Endothelial cell of umbilical vein (primary cell): ENCODE measurements at regions of chr1 and their contacts with region 1.

Region 1: GRCh38 chr1:225977937-225978748 is 21.0 kb downstream of the SDE2 start:
- DNase-seq: no peak
- H3K4me3 ChIP-seq: no peak overlapping the region
- H3K27ac ChIP-seq: no peak overlapping the region
- H3K4me1 ChIP-seq: no peaks in the 10 kb centered on the region
- H3K27me3 ChIP-seq: no peaks in the 10 kb centered on the region
- CTCF ChIP-seq: no peak
- POLR2A ChIP-seq: no peak

Region 2: GRCh38 chr1:224503161-224504118 is 1474.7 kb before region 1 on chr1:
- CTCF ChIA-PET with region 1: no interaction called
- POLR2A ChIA-PET with region 1: no interaction called
- dilution Hi-C with region 1: no loop called
- intact Hi-C with region 1: no loop called
- DNase-seq: peak; percentile 93
- H3K4me3 ChIP-seq: no peak overlapping the region
- H3K27ac ChIP-seq: peak overlapping the region; percentile 23
- H3K4me1 ChIP-seq: peaks cover 28% of the 10 kb centered on the region
- H3K27me3 ChIP-seq: no peaks in the 10 kb centered on the region
- CTCF ChIP-seq: peak in 1 of 2 donors; percentile 27
- POLR2A ChIP-seq: no peak

Region 3: DNA sequence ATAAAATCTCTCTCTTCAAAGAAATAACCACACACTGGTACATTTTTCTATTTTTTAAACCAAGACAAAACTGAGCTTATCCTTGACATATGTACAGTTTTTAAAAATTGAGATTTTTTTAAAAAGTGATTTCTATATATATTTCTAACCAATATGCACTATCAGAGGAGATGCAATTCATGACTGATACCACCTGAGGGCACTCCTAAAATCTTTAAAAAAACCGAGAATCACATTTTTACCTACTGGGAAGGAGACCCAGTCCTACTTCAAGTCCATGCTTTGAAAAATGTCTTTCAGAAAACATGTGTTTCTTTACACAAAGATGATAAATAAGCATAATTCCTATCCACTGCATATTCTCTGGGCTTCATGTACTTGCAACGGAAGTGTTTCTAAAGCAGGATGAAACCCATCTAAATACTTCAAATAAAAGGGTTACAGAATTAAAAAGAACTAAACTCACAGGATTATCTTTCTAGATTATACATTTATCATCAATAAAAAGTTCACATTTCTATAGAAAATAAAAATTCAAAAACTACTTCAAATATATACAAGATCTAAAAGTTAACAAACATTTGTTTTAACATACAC is 423.8 kb before region 1 on chr1:
- CTCF ChIA-PET with region 1: no interaction called
- POLR2A ChIA-PET with region 1: no interaction called
- dilution Hi-C with region 1: no loop called
- intact Hi-C with region 1: loop called (anchors 10 kb)
- DNase-seq: peak; percentile 57
- H3K4me3 ChIP-seq: no peak overlapping the region
- H3K27ac ChIP-seq: no peak overlapping the region
- H3K4me1 ChIP-seq: no peaks in the 10 kb centered on the region
- H3K27me3 ChIP-seq: no peaks in the 10 kb centered on the region
- CTCF ChIP-seq: peak; percentile 30 to 32
- POLR2A ChIP-seq: no peak

Region 4: DNA sequence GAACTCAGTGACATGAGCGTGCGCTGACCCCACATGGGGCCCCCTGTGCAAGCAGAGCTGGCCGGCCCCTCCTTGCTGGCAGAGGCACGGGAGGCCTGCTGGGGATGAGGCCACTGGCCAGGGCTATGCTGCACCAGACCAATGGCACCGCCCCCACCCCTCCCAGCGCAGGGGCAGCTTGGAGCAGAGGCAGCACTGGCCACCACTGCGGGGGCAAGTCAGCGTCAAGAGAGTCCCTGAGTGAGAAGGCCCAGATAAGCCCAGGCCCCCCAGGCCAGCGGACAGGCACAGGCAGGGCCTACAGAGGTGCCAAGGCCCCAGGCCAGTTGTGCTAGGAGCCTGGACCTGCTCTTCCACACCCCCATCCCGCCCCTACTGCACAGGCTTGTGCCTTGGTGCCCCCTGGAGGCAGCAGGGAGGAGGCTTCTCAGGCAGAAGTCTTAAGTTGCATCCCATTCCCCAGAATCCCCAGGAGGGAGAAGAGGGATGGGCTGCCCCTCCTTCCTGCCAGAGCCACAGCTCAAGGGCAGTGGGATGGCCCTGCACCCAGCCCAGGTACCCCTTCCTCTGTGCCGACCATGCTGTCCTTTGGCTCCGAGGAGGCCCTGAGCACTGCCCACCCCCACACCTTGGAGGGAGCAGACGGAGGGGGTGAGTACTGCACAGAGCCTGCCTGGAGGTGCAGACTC is 132.4 kb before region 1 on chr1:
- CTCF ChIA-PET with region 1: no interaction called
- POLR2A ChIA-PET with region 1: no interaction called
- dilution Hi-C with region 1: no loop called
- intact Hi-C with region 1: loop called (anchors 1 kb)
- DNase-seq: peak; percentile 70
- H3K4me3 ChIP-seq: no peak overlapping the region
- H3K27ac ChIP-seq: no peak overlapping the region
- H3K4me1 ChIP-seq: no peaks in the 10 kb centered on the region
- H3K27me3 ChIP-seq: no peaks in the 10 kb centered on the region
- CTCF ChIP-seq: peak; percentile 72 to 91
- POLR2A ChIP-seq: no peak

Region 5: GRCh38 chr1:225866061-225866837 is 111.9 kb before region 1 on chr1:
- CTCF ChIA-PET with region 1: interaction called, 4 read pairs
- POLR2A ChIA-PET with region 1: no interaction called
- dilution Hi-C with region 1: no loop called
- intact Hi-C with region 1: loop called (anchors 5 kb)
- DNase-seq: peak; percentile 57
- H3K4me3 ChIP-seq: no peak overlapping the region
- H3K27ac ChIP-seq: no peak overlapping the region
- H3K4me1 ChIP-seq: peaks cover 12% of the 10 kb centered on the region
- H3K27me3 ChIP-seq: no peaks in the 10 kb centered on the region
- CTCF ChIP-seq: no peak
- POLR2A ChIP-seq: no peak